HepG2 (cell line): ENCODE measurements at regions of chr2 and their contacts with region 1.

Region 1: DNA sequence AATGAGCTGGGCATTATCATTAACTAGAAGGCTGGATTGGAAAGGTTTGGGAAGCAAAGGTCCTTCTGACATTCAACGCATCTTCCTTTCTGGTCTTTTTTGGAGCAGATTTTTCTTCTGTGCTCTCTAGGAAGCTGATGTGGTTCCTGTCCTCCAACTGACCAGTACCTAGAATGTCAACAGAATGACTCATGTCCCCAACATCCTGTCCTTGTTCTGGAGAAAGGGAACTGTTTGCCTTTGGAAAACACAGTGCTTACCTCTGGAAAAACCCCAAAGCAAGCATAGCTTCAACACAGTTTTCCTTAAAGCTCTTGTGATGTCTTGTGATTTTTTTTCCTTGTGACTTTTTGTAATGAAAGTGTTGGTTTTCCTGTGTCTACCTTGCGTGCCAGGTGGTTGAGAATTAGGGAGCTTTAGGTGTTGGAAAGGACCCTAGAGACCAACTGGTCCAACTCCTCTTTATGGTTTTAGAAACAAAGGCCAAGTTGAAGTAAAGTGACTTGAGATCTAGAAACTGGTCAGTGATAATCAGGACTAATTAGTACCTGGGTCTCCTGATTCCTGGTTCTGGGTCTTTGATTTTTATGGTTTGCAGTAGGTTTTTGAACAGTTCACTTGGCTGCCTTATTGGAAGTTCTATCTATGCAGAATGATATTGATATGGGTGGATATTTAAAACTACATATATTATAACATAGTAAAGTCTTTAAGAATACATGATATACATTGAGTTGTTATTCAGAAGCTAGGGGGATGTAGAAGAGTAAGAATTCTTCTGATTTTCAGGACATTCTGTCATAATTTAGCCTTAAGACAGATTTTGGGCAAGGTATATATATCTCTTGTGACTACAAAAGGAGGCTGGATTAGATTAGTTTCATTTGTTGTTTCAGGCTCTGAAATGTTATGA is 70.5 kb downstream of the FMNL2 start:
- DNase-seq: peak; percentile 96
- ATAC-seq: peak; percentile 87
- H3K4me3 ChIP-seq: no peak overlapping the region
- H3K27ac ChIP-seq: peak overlapping the region; percentile 56
- H3K4me1 ChIP-seq: peaks cover 96% of the 10 kb centered on the region
- H3K27me3 ChIP-seq: no peaks in the 10 kb centered on the region
- CTCF ChIP-seq: no peak
- EP300 ChIP-seq: peak; percentile 57 to 97; a peak in 3 of 4 replicates
- POLR2A ChIP-seq: no peak
- RAD21 ChIP-seq: no peak

Region 2: GRCh38 chr2:152354909-152355308 is 50.6 kb before region 1 on chr2:
- CTCF ChIA-PET with region 1: no interaction called
- POLR2A ChIA-PET with region 1: interaction called, 3 read pairs
- in situ Hi-C with region 1: no loop called
- intact Hi-C with region 1: loop called (anchors 2 kb)
- DNase-seq: no peak
- ATAC-seq: no peak
- H3K4me3 ChIP-seq: peak overlapping the region in 1 of 3 experiments; percentile 8; a peak in 1 of 6 replicates
- H3K27ac ChIP-seq: peak overlapping the region; percentile 56
- H3K4me1 ChIP-seq: peaks cover 88% of the 10 kb centered on the region
- H3K27me3 ChIP-seq: no peaks in the 10 kb centered on the region
- CTCF ChIP-seq: no peak
- EP300 ChIP-seq: no peak
- POLR2A ChIP-seq: no peak
- RAD21 ChIP-seq: no peak

Region 3: DNA sequence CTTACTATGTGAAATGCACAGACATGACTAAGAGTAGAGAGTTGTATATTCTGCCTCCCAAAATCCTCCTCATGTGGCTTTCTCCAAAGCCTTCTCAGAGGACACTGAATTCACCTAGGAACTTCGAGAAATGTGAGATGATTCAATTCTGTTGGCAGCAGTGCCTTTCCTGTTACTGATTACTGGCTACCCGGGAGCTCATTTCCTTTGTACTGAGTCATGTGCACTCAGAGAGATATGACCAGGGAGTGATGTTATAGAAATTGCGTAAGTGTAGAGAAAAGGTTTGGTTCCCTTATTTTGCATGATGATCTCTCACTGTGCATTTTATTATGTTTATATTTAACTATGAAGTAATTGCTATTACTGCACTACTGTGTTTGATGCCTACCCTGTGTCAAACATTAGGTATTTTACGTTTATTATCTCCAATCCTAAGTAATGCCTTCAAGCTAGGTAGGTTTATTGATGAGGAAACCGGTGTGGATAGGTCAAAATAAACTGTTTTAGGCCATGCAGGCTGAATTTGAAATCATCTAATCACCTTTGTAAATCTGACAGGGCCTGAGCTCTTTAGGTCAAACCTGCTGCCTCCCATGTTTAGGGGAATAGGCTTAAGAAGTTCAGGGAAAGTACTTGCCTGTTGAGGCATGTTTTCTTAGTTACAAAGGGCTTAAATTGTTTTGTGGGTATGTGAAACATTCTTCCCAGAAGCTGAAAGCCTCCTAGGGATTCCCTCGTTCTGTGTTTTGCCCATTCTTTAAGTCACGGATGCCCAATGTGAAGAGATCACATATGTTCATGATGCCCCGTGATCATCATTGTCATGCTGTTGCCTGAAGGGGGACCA is 16.3 kb after region 1 on chr2:
- CTCF ChIA-PET with region 1: no interaction called
- POLR2A ChIA-PET with region 1: interaction called, 11 read pairs
- in situ Hi-C with region 1: no loop called
- intact Hi-C with region 1: no loop called
- DNase-seq: peak; percentile 89
- ATAC-seq: peak; percentile 74
- H3K4me3 ChIP-seq: no peak overlapping the region
- H3K27ac ChIP-seq: peak overlapping the region; percentile 11
- H3K4me1 ChIP-seq: peaks cover 73% of the 10 kb centered on the region
- H3K27me3 ChIP-seq: no peaks in the 10 kb centered on the region
- CTCF ChIP-seq: no peak
- EP300 ChIP-seq: peak in 1 of 2 experiments; percentile 65; a peak in 2 of 4 replicates
- POLR2A ChIP-seq: no peak
- RAD21 ChIP-seq: no peak

Region 4: GRCh38 chr2:152445791-152446201 is 40.3 kb after region 1 on chr2:
- CTCF ChIA-PET with region 1: no interaction called
- POLR2A ChIA-PET with region 1: no interaction called
- in situ Hi-C with region 1: no loop called
- intact Hi-C with region 1: no loop called
- DNase-seq: no peak
- ATAC-seq: no peak
- H3K4me3 ChIP-seq: no peak overlapping the region
- H3K27ac ChIP-seq: no peak overlapping the region
- H3K4me1 ChIP-seq: peaks cover 59% of the 10 kb centered on the region
- H3K27me3 ChIP-seq: no peaks in the 10 kb centered on the region
- CTCF ChIP-seq: no peak
- EP300 ChIP-seq: no peak
- POLR2A ChIP-seq: no peak
- RAD21 ChIP-seq: no peak

Region 5: DNA sequence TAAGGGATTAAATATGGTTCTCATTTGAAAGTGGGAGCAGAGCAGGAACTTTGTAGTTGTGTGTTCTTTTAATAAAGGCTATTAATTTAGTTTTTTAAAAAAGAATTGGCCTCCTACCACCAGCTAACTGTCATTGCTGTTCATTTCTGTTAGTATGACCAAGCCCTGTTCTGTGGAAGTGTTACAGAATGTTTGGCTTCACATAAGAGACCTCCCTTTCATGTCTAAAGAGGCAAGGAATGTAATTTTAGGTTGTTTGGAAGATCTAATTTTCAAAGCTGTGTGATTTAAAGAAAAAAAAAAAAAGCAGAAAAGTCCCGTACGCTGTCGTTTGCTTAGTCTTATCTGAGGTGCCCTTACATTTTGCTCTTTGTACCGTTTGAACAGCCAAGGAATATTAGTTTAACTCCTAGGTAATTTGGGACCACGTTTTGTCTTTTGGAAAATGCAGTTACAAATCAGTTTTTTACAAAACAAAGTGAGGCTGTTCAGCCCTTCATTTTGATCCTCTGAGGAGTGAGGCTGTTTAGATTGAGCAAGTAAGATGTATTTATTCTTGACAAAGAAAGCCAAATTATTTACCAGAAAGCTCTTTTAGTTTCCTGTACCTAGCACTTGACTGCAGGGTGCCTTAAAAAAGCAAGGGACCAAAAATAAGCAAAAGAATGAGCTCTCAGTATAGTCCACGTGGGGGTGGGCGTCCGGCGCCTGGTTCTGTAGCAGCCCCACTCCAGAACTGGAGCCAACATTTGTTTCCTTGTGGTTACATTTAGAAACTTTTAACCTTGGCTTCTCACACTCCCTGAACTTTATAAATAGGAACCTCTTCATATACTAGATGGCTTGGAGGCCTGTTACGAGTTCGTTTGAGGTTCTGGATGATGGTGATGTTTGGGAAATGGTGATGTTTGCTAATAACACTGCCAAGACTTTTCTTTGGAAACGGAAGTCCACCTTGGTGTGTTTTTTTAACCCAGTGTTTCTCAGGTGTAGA is 65.7 kb after region 1 on chr2:
- CTCF ChIA-PET with region 1: no interaction called
- POLR2A ChIA-PET with region 1: no interaction called
- in situ Hi-C with region 1: no loop called
- intact Hi-C with region 1: loop called (anchors 1 kb)
- DNase-seq: peak; percentile 46
- ATAC-seq: peak; percentile 29
- H3K4me3 ChIP-seq: peak overlapping the region in 2 of 3 experiments; percentile 29 to 34; a peak in 3 of 6 replicates
- H3K27ac ChIP-seq: peak overlapping the region; percentile 57
- H3K4me1 ChIP-seq: peaks cover 98% of the 10 kb centered on the region
- H3K27me3 ChIP-seq: no peaks in the 10 kb centered on the region
- CTCF ChIP-seq: no peak
- EP300 ChIP-seq: peak in 1 of 2 experiments; percentile 42; a peak in 1 of 4 replicates
- POLR2A ChIP-seq: no peak
- RAD21 ChIP-seq: no peak

Region 6: DNA sequence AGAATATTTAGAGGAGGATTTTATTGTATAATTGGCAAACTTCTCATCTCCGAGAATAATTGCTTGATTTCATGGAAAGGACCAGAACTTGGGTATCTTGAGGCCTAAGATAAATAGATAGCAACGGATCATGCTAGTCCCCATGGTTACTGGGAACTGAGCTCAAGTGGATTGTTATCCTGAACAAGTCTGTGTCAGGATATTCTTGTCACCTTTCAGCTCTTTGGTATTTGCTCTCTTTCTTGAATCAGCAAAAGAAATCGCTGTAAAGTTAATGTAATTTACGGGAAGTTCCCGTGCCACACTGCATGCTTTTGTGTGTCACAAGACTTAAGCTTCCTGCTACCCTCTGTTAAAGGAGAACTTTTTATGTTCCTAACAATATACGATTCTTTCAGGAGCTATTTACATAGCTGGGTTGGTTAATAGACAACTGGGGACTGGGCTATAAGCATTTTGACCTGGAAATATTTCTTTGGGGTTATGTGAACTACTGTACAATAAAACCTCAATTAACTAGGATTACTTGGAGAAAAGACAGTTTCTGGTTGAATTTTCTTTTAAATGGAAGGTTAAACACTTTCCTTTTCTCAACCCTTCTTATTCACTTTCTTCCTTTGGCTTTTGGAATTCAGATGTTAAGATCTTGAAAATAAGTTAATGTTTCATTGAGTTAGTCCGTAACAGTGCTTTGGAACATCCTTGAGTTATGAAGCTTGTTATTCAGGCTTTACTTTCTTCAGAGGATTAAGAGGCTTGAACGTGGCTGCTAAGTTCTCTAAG is 80.7 kb after region 1 on chr2:
- CTCF ChIA-PET with region 1: no interaction called
- POLR2A ChIA-PET with region 1: interaction called, 14 read pairs
- in situ Hi-C with region 1: no loop called
- intact Hi-C with region 1: no loop called
- DNase-seq: peak; percentile 99
- ATAC-seq: peak; percentile 96
- H3K4me3 ChIP-seq: peak overlapping the region in 2 of 3 experiments; percentile 6 to 36; a peak in 3 of 6 replicates
- H3K27ac ChIP-seq: peak overlapping the region; percentile 84
- H3K4me1 ChIP-seq: peaks cover 100% of the 10 kb centered on the region
- H3K27me3 ChIP-seq: no peaks in the 10 kb centered on the region
- CTCF ChIP-seq: no peak
- EP300 ChIP-seq: peak; percentile 62 to 99; a peak in 2 of 4 replicates
- POLR2A ChIP-seq: peak in 1 of 2 experiments; percentile 48; a peak in 1 of 4 replicates
- RAD21 ChIP-seq: peak; percentile 41; the same call in 1 of the 2 replicates

Region 7: DNA sequence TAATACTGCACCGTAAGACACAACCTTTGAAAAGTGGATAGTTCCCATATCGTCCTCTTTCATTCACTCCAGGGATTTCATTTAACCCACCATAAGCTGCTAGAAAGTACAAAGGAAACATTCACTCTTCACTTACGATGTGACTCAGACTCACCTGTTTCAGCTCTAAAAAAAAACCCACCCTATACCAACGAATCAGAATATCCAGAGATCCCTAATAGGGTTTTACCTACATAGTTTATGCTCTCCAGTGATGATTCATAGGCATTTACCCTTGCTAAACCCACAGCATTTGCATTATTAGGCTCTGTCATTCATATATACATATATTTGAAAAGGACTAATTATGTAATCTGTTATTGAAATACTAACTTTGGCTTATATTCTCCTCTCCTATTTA is 251.6 kb after region 1 on chr2:
- CTCF ChIA-PET with region 1: no interaction called
- POLR2A ChIA-PET with region 1: no interaction called
- in situ Hi-C with region 1: no loop called
- intact Hi-C with region 1: no loop called
- DNase-seq: no peak
- ATAC-seq: no peak
- H3K4me3 ChIP-seq: no peak overlapping the region
- H3K27ac ChIP-seq: no peak overlapping the region
- H3K4me1 ChIP-seq: peaks cover 10% of the 10 kb centered on the region; the same call in 1 of the 2 replicates
- H3K27me3 ChIP-seq: no peaks in the 10 kb centered on the region
- CTCF ChIP-seq: no peak
- EP300 ChIP-seq: no peak
- POLR2A ChIP-seq: no peak
- RAD21 ChIP-seq: no peak